ENCODE measurements at regions of chr7 and their contacts with region 1.

Region 1: DNA sequence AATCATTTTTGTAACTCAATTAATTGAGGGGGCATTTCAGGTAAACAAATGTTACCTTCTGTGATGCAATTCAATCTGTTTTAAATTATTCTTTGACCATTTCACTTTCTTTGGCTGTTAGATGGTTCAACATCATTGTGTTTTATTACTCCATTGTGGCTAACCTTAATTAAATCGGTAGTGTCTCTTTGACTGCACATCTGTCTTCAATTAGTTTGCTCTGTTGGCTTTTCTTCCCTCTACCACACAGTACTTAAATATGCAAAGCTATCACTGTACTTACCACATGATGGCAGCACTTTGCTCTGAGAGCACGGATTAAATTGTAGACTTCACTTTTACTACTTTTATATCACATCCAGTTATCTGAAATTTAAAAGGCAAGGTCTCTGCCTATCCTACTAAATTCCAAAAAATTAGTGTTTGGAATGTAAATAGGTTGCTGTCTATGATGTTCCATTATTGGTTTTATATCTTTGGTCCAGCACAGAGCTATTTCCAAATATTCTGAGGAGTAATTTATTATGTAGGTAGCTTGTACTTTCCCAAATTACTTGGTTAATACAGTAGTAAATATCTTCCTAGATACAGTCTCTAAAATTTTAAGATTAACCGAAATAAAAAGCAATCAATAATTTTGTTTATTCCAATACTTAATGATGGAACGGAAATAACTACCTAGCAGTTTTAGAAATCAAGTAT is 352.0 kb downstream of the PCLO start:
- DNase-seq: no peak
- H3K4me3 ChIP-seq: no peak overlapping the region
- H3K27ac ChIP-seq: no peak overlapping the region
- H3K4me1 ChIP-seq: peaks cover 0 to under 1% (median under 1%) of the 10 kb centered on the region in 4 experiments; a peak in 1 of 7 replicates
- H3K27me3 ChIP-seq: no peaks in the 10 kb centered on the region
- CTCF ChIP-seq: peak in 2 of 3 experiments; percentile 55 to 73; a peak in 2 of 4 replicates
- EP300 ChIP-seq: no peak
- POLR2A ChIP-seq: no peak
- RAD21 ChIP-seq: peak; percentile 77 to 80

Region 2: GRCh38 chr7:82494420-82494819 is 316.3 kb before region 1 on chr7:
- CTCF ChIA-PET with region 1: no interaction called
- POLR2A ChIA-PET with region 1: no interaction called
- DNase-seq: no peak
- H3K4me3 ChIP-seq: no peak overlapping the region
- H3K27ac ChIP-seq: no peak overlapping the region
- H3K4me1 ChIP-seq: no peaks in the 10 kb centered on the region
- H3K27me3 ChIP-seq: peaks cover 0 to 1% (median 0%) of the 10 kb centered on the region in 4 experiments; a peak in 1 of 7 replicates
- CTCF ChIP-seq: no peak
- EP300 ChIP-seq: no peak
- POLR2A ChIP-seq: no peak
- RAD21 ChIP-seq: no peak

Region 3: DNA sequence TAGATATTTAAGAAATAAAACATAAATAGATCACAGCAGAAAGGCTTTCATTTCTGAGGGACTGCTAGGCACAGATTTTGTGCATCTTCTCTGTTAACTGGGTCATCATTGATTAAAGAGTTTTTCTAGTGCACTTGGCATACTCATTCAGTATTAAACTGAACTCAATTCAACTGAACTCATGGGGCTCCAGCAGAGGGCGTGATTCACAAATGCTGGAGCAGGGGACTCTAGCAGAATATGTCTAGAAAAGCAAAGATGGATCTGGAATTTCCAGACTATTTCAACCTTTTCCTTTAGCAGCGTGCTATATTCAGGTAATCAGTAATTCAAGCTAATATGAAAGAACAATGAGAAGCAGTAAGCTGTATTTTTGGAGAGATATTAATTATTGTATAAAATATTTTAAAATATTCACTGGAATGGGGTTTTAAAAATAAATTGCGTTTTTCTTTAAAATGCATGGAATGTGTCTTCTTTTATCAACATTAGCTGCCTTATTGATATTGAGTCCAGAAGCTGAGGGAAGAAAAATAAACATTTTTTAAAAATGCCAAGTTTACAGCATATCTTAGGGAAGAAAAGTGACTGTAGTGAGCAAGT is 70.4 kb before region 1 on chr7:
- CTCF ChIA-PET with region 1: interaction called, 30 read pairs
- POLR2A ChIA-PET with region 1: no interaction called
- DNase-seq: peak in 1 of 2 experiments; percentile 64
- H3K4me3 ChIP-seq: no peak overlapping the region
- H3K27ac ChIP-seq: no peak overlapping the region
- H3K4me1 ChIP-seq: no peaks in the 10 kb centered on the region; a peak in 1 of 7 replicates
- H3K27me3 ChIP-seq: no peaks in the 10 kb centered on the region
- CTCF ChIP-seq: peak in 2 of 3 experiments; percentile 71 to 82; a peak in 3 of 4 replicates
- EP300 ChIP-seq: no peak
- POLR2A ChIP-seq: no peak
- RAD21 ChIP-seq: peak; percentile 75 to 81

Region 4: DNA sequence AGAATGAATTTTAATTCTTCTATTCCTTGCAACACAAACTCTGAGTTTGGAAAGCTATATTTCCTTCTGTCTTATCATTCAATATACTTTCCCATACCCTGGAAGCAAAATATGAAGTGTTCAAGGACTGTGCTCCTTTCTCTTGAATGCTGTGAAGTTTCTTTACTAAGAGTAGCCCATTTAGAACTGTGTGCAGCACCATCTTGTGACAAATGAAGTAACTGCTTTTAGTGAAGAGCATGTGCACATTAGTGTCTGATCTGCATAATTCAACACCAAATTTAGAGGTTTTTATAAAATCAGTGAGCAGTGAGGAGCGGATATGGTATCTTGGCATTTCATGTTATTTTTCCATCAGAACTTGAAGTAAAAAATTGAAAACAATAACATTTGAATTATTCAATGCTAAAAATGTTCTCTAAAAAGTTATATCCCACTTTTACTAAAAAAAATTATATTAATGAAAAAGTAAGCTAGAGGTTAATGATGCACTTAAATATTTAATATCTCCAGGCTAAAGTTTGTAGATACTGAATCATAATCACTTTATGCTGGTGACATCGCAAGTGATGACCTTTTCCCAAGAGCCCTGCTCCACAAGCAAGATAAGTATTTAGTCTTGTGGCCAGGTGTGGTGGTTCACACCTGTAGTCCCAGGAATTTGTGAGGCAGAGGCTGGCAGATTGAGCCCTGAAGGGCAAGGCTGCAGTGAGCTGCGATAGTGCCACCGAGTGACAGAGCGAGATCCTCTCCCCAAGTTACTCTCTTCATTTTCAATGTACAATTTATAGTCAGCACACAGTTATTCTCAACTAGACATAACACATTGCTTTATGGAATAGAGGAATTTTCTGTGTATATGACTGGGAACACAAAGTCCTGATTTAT is 460.7 kb after region 1 on chr7:
- CTCF ChIA-PET with region 1: interaction called, 13 read pairs
- POLR2A ChIA-PET with region 1: no interaction called
- DNase-seq: no peak
- H3K4me3 ChIP-seq: no peak overlapping the region
- H3K27ac ChIP-seq: no peak overlapping the region
- H3K4me1 ChIP-seq: no peaks in the 10 kb centered on the region
- H3K27me3 ChIP-seq: no peaks in the 10 kb centered on the region
- CTCF ChIP-seq: peak; percentile 22 to 60 (median 58); a peak in 3 of 4 replicates
- EP300 ChIP-seq: no peak
- POLR2A ChIP-seq: no peak
- RAD21 ChIP-seq: peak; percentile 79 to 81